B cell (primary cell): ENCODE measurements at regions of chr17 and their contacts with region 1.

Region 1: DNA sequence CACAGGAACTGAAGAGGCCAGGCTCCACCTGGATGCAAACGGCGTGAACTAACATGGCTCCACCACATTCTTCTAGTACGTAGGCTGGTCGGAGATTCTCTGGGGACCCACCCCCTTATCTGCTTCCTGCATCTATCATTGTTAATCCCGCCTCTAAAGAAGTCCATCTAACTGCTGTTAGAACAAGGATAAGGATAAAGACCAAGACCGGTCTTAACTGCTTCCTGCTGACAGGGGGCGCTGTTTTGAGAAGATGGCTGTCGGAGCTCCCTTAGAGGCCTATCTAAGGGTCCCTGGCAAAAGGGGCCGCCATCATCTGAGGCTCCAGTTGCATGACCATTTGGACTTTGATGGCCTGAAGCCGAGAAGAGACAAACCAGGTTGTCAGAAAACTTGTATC is 25.8 kb upstream of the TNFSF12 start:
- DNase-seq: peak; percentile 68
- ATAC-seq: peak; percentile 51
- H3K4me3 ChIP-seq: no peak overlapping the region
- H3K4me3 Mint-ChIP-seq: no peak overlapping the region
- H3K27ac ChIP-seq: no peak overlapping the region
- H3K27ac Mint-ChIP-seq: no peak overlapping the region
- H3K4me1 ChIP-seq: no peaks in the 10 kb centered on the region
- H3K4me1 Mint-ChIP-seq: no peaks in the 10 kb centered on the region
- H3K27me3 ChIP-seq: no peaks in the 10 kb centered on the region
- H3K27me3 Mint-ChIP-seq: no peaks in the 10 kb centered on the region
- CTCF ChIP-seq: peak; percentile 71

Region 2: GRCh38 chr17:7589204-7589868 is 66.3 kb after region 1 on chr17:
- CTCF ChIA-PET with region 1: interaction called, 11 read pairs
- POLR2A ChIA-PET with region 1: no interaction called
- intact Hi-C with region 1: no loop called
- DNase-seq: peak; percentile 84
- ATAC-seq: peak; percentile 86
- H3K4me3 ChIP-seq: no peak overlapping the region
- H3K4me3 Mint-ChIP-seq: no peak overlapping the region
- H3K27ac ChIP-seq: no peak overlapping the region
- H3K27ac Mint-ChIP-seq: no peak overlapping the region
- H3K4me1 ChIP-seq: peaks cover 7 to 21% of the 10 kb centered on the region in 2 donors
- H3K4me1 Mint-ChIP-seq: peaks cover 10% of the 10 kb centered on the region
- H3K27me3 ChIP-seq: no peaks in the 10 kb centered on the region
- H3K27me3 Mint-ChIP-seq: no peaks in the 10 kb centered on the region
- CTCF ChIP-seq: peak; percentile 91